Vagina (tissue), 2 donors: ENCODE measurements at regions of chr4 and their contacts with region 1.

Region 1: DNA sequence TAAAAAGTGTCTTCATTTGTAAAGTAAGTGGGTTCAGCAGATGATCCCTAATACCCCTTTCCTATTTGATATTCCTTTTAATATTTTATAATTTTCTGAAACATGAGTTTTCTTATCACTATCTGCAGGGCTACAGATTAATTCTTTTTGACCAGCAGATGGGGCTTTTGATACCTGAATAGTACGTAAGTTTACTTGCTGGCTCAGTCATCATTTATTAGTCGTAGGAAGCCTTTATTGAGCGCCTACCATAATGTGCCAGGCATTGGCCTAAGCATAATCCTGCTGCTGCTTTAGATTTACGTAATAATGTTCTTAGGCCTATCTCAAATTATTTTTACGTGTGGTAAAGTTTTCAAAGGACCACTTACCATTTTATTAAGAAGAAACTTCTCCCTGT is 33.1 kb downstream of the OSTC start:
- DNase-seq: no peak
- H3K4me3 ChIP-seq: no peak overlapping the region
- H3K27ac ChIP-seq: no peak overlapping the region
- H3K4me1 ChIP-seq: no peaks in the 10 kb centered on the region
- H3K27me3 ChIP-seq: no peaks in the 10 kb centered on the region
- CTCF ChIP-seq: no peak
- POLR2A ChIP-seq: no peak

Region 2: GRCh38 chr4:108644237-108644636 is 39.2 kb before region 1 on chr4:
- intact Hi-C with region 1: no loop called
- DNase-seq: no peak
- H3K4me3 ChIP-seq: no peak overlapping the region
- H3K27ac ChIP-seq: no peak overlapping the region
- H3K4me1 ChIP-seq: no peaks in the 10 kb centered on the region
- H3K27me3 ChIP-seq: no peaks in the 10 kb centered on the region
- CTCF ChIP-seq: no peak
- POLR2A ChIP-seq: no peak

Region 3: GRCh38 chr4:108796173-108796572 is 112.7 kb after region 1 on chr4:
- intact Hi-C with region 1: no loop called
- DNase-seq: no peak
- H3K4me3 ChIP-seq: no peak overlapping the region
- H3K27ac ChIP-seq: no peak overlapping the region
- H3K4me1 ChIP-seq: no peaks in the 10 kb centered on the region
- H3K27me3 ChIP-seq: no peaks in the 10 kb centered on the region
- CTCF ChIP-seq: no peak
- POLR2A ChIP-seq: no peak

Region 4: GRCh38 chr4:108851366-108851765 is 167.9 kb after region 1 on chr4:
- intact Hi-C with region 1: no loop called
- DNase-seq: no peak
- H3K4me3 ChIP-seq: no peak overlapping the region
- H3K27ac ChIP-seq: no peak overlapping the region
- H3K4me1 ChIP-seq: no peaks in the 10 kb centered on the region
- H3K27me3 ChIP-seq: no peaks in the 10 kb centered on the region
- CTCF ChIP-seq: no peak
- POLR2A ChIP-seq: no peak

Region 5: GRCh38 chr4:109406338-109406931 is 723.0 kb after region 1 on chr4:
- intact Hi-C with region 1: loop called (anchors 10 kb)
- DNase-seq: no peak
- H3K4me3 ChIP-seq: no peak overlapping the region
- H3K27ac ChIP-seq: no peak overlapping the region
- H3K4me1 ChIP-seq: no peaks in the 10 kb centered on the region
- H3K27me3 ChIP-seq: no peaks in the 10 kb centered on the region
- CTCF ChIP-seq: peak in 2 of 3 experiments; percentile 35 to 58
- POLR2A ChIP-seq: no peak

Region 6: GRCh38 chr4:110567214-110567613 is 1883.7 kb after region 1 on chr4:
- intact Hi-C with region 1: no loop called
- DNase-seq: no peak
- H3K4me3 ChIP-seq: no peak overlapping the region
- H3K27ac ChIP-seq: no peak overlapping the region
- H3K4me1 ChIP-seq: no peaks in the 10 kb centered on the region
- H3K27me3 ChIP-seq: no peaks in the 10 kb centered on the region
- CTCF ChIP-seq: no peak
- POLR2A ChIP-seq: no peak